ENCODE measurements at regions of chr11 and their contacts with region 1.

Region 1: DNA sequence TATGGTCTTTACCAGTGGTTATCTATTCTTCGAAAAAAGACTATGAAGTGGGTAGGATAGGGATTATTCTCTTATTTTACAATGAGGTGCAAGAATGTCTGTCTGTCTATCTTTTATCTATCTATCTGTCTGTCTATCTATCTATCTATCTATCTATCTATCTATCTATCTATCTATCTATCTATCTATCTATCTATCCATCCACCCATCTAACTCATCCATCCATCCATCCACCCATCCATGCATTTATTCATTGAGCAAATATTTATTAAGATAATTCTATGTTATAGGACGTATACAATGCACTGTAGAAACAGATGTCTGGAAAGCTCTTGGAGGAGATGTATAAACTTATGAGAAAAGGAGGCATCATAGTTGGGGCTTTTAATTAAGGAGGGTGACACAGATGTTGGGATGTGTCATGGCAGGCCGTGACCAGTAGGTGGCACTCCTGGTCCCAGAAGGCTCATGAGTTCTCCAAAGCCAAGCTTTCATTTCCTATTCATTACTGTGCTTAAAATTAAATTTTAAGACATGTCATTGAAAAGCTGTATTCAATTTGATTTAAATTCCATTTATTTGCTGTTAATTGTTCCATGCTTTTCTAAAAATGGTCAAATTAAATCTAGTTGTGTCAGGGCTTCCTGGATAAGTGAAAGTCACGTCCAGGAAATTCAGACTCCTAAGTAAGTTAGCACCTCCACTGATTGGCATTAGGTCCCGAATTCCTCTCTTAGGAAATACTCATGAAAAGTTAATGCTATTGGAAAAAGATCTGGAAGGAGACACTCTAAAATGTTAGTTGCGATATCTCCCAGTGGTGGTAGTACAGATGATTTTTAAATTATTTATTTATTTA is 19.0 kb upstream of the E2F8 start:
- DNase-seq: peak; percentile 73
- H3K4me3 ChIP-seq: peak overlapping the region in 1 of 3 experiments; percentile 30
- H3K27ac ChIP-seq: no peak overlapping the region
- H3K4me1 ChIP-seq: no peaks in the 10 kb centered on the region
- H3K27me3 ChIP-seq: peaks cover 9 to 11% of the 10 kb centered on the region in 2 experiments
- CTCF ChIP-seq: peak; percentile 87 to 95
- POLR2A ChIP-seq: no peak

Region 2: DNA sequence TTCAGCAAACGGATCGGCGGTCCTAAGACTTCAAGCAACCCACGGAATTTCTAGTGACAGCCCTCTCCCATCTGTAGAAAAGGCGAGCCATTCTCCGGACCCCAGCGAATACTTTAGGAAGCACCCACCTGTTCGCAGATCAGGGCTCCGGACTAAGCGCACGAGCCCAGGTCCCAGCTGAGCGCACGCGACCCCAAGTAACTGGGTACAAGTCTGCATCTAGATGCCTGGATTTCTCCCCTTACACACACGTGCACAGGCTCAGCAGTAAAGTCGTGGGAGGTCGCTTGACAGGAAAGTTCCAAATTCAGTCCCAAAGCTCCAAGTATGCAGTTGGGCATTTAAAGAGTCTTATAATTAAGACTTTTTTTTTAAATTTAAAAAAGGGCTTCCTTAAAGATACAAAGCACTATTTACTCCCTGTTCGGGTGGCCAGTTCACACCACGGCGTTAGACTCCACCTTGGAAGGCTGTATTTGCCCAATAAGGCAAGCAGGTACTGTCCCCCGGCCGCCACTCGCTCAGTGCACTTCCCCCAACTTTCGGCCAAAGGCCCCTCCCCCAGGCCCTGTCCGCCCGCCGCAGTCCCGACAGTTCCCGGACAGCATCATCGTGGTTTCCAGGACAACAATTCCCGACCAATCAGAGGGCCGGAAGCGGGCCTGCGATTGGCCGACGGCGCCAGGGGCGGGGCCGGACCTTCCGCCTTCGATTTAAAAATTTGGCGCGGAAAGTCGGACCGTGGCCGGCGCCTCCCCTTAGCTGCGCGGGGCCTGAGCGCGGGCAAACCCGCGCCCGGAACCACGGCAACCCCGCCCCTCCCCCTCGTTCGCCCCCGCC is 19.1 kb before region 1 on chr11 and contains the start of gene E2F8:
- CTCF ChIA-PET with region 1: interaction called, 16 read pairs
- POLR2A ChIA-PET with region 1: no interaction called
- dilution Hi-C with region 1: no loop called
- intact Hi-C with region 1: no loop called
- DNase-seq: peak; percentile 96
- H3K4me3 ChIP-seq: peak within 1 kb of the TSS; percentile 88 to 92 (median 88)
- H3K27ac ChIP-seq: peak within 1 kb of the TSS; percentile 44
- H3K4me1 ChIP-seq: peaks cover 22% of the 10 kb centered on the region
- H3K27me3 ChIP-seq: no peaks in the 10 kb centered on the region
- CTCF ChIP-seq: no peak
- POLR2A ChIP-seq: peak; percentile 41
- total RNA-seq, gene E2F8: 16.5 and 19.1 TPM in 2 replicates

Region 3: DNA sequence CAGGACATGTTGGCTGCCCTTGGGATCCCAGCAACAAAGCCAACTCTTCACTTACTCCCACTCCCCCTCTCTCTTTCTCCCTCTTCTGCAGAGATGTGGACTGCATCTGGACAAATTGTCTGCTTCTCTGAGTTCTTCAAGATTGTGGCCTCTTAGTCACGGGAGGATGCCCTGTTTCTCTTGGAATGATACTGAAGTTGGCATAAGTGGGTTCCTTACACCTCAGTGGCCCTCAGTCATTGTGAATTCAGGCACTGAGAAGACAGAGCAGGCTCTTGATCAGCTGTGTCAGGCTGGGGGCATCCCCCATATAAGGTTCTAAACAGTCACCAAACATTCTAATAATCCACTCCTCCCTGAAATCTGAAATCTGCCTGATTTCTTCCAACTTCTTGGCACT is 12.9 kb before region 1 on chr11:
- CTCF ChIA-PET with region 1: interaction called, 16 read pairs
- POLR2A ChIA-PET with region 1: no interaction called
- dilution Hi-C with region 1: no loop called
- intact Hi-C with region 1: no loop called
- DNase-seq: no peak
- H3K4me3 ChIP-seq: no peak overlapping the region
- H3K27ac ChIP-seq: no peak overlapping the region
- H3K4me1 ChIP-seq: peaks cover 5% of the 10 kb centered on the region
- H3K27me3 ChIP-seq: peaks cover 4 to 8% of the 10 kb centered on the region in 2 experiments
- CTCF ChIP-seq: no peak
- POLR2A ChIP-seq: no peak

Region 4: GRCh38 chr11:19275481-19275880 is 15.8 kb after region 1 on chr11:
- CTCF ChIA-PET with region 1: interaction called, 17 read pairs
- POLR2A ChIA-PET with region 1: no interaction called
- dilution Hi-C with region 1: no loop called
- intact Hi-C with region 1: no loop called
- DNase-seq: no peak
- H3K4me3 ChIP-seq: no peak overlapping the region
- H3K27ac ChIP-seq: no peak overlapping the region
- H3K4me1 ChIP-seq: no peaks in the 10 kb centered on the region
- H3K27me3 ChIP-seq: peaks cover 0 to 17% of the 10 kb centered on the region in 2 experiments
- CTCF ChIP-seq: no peak
- POLR2A ChIP-seq: no peak

Region 5: GRCh38 chr11:19281041-19281440 is 21.3 kb after region 1 on chr11:
- CTCF ChIA-PET with region 1: interaction called, 14 read pairs
- POLR2A ChIA-PET with region 1: no interaction called
- dilution Hi-C with region 1: no loop called
- intact Hi-C with region 1: no loop called
- DNase-seq: peak; percentile 6
- H3K4me3 ChIP-seq: no peak overlapping the region
- H3K27ac ChIP-seq: no peak overlapping the region
- H3K4me1 ChIP-seq: no peaks in the 10 kb centered on the region
- H3K27me3 ChIP-seq: peaks cover 6 to 9% of the 10 kb centered on the region in 2 experiments
- CTCF ChIP-seq: no peak
- POLR2A ChIP-seq: no peak

Region 6: DNA sequence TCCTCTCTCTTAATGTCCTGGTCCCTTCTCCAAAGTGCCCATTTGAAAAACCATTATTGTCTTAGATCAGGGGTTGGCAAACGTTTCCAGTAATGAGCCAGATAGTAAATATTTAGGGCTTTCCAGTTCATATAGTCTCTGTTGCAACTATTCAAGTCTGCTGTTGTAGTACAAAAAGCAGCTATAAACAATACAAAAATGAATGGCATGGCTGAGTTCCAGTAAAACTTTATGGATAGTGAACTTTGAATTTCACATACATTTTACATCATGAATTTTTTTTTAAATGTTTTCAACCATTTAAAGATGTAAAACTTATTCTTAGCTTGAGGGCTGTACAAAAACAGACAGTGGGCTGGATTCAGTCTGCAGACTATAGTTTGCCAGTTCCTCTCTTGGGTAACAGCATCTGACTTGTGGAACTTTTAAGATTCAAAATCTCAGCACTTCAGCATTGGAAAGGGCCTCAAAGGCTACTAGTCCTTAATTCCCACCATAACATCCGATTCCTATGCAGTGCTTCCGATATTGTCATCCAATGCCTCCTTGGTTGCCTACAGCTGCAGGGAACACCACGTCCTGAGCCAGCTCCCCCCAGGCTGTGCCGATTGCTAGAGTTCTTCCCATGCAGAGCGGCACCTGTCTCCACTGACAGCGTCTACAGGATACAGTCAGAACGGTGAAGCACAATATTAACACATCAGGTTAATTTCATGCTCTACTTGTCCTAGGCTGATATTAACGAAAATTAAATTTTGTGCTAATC is 46.6 kb after region 1 on chr11:
- CTCF ChIA-PET with region 1: interaction called, 4 read pairs
- POLR2A ChIA-PET with region 1: no interaction called
- dilution Hi-C with region 1: no loop called
- intact Hi-C with region 1: loop called (anchors 5 kb)
- DNase-seq: no peak
- H3K4me3 ChIP-seq: no peak overlapping the region
- H3K27ac ChIP-seq: no peak overlapping the region
- H3K4me1 ChIP-seq: no peaks in the 10 kb centered on the region
- H3K27me3 ChIP-seq: peaks cover 11 to 17% of the 10 kb centered on the region in 2 experiments
- CTCF ChIP-seq: no peak
- POLR2A ChIP-seq: no peak

Region 7: GRCh38 chr11:19546325-19546724 is 286.6 kb after region 1 on chr11:
- CTCF ChIA-PET with region 1: interaction called, 21 read pairs
- POLR2A ChIA-PET with region 1: no interaction called
- dilution Hi-C with region 1: no loop called
- intact Hi-C with region 1: no loop called
- DNase-seq: no peak
- H3K4me3 ChIP-seq: no peak overlapping the region
- H3K27ac ChIP-seq: no peak overlapping the region
- H3K4me1 ChIP-seq: no peaks in the 10 kb centered on the region
- H3K27me3 ChIP-seq: no peaks in the 10 kb centered on the region
- CTCF ChIP-seq: no peak
- POLR2A ChIP-seq: no peak

Region 8: GRCh38 chr11:19642185-19643158 is 382.8 kb after region 1 on chr11:
- CTCF ChIA-PET with region 1: no interaction called
- POLR2A ChIA-PET with region 1: no interaction called
- dilution Hi-C with region 1: no loop called
- intact Hi-C with region 1: no loop called
- DNase-seq: no peak
- H3K4me3 ChIP-seq: no peak overlapping the region
- H3K27ac ChIP-seq: no peak overlapping the region
- H3K4me1 ChIP-seq: no peaks in the 10 kb centered on the region
- H3K27me3 ChIP-seq: no peaks in the 10 kb centered on the region
- CTCF ChIP-seq: no peak
- POLR2A ChIP-seq: no peak